ENCODE measurements at regions of chr3 and their contacts with region 1.

Region 1: DNA sequence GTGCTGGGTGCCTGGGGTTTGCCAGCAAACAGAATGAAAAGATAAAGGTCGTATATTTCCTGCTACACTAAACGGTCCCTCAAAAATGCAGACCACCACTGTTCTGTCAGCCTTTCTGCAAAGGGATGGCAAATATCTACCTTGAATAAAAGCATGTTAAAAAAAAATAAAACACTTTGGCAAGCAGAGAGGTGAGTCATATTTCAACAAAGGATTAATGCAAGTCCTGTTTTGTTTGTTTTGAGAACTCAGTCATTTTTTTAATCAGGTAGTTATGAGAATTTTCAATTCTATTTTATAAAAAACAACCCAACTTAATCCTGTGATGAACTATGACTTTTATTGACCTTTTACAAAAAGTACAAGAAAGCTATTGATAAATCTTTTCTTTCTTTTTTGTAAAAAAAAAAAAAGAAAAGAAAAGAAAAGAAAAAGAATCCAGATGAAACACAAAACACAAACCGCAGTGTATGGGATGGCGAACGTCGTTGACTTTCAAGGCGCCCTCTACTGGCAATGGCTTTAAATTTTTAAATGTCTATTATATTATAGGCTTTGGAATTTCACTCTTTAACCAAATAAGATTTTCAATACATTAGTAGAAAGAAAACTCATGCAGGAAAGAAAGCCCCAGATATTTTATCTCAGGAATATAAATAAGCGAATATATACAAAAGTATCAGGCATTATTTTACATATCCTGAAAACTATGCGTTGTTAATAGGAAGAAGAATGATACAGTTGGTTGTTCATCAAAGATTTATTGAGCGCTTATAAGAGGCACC is 87.8 kb downstream of the NCEH1 start:
- DNase-seq: no peak
- H3K4me3 ChIP-seq: no peak overlapping the region
- CTCF ChIP-seq: peak; percentile 30

Region 2: GRCh38 chr3:170768334-170768801 is 1854.7 kb before region 1 on chr3:
- CTCF ChIA-PET with region 1: no interaction called
- POLR2A ChIA-PET with region 1: no interaction called
- DNase-seq: no peak
- H3K4me3 ChIP-seq: no peak overlapping the region
- CTCF ChIP-seq: no peak

Region 3: GRCh38 chr3:172142051-172142863 is 480.9 kb before region 1 on chr3:
- CTCF ChIA-PET with region 1: no interaction called
- POLR2A ChIA-PET with region 1: no interaction called
- DNase-seq: peak; percentile 40
- H3K4me3 ChIP-seq: no peak overlapping the region
- CTCF ChIP-seq: no peak

Region 4: GRCh38 chr3:172607305-172608121 is 15.6 kb before region 1 on chr3:
- CTCF ChIA-PET with region 1: interaction called, 17 read pairs
- POLR2A ChIA-PET with region 1: interaction called, 4 read pairs
- DNase-seq: peak; percentile 52
- H3K4me3 ChIP-seq: no peak overlapping the region
- CTCF ChIP-seq: no peak

Region 5: DNA sequence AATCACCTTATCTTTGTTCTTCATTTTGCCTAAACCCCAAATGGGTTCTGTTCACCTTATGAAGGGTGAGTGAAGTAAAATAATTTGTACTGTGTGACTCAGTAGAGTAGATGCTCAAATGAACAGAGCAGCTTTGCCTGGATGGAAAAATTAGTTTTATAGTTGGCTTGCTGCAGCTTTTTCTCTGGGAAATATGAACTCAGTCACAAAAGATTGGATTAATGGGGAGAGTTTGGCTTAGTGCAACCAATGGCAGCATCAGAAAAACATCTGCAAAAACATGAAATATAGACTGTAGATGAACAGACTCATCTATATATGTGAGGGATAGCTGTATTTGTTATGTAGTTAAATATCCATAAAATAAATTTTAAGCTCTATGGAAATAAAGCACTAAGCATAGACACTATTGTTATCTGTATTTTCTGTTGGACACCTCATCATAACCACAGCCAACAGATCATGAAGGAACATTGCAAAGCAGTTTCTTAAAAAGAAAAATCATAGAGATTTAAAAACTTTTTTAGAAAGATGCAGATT is 308.7 kb after region 1 on chr3:
- CTCF ChIA-PET with region 1: no interaction called
- POLR2A ChIA-PET with region 1: no interaction called
- DNase-seq: no peak
- H3K4me3 ChIP-seq: no peak overlapping the region
- CTCF ChIP-seq: no peak